Breast epithelium (tissue), 4 donors: ENCODE measurements at regions of chr3 and their contacts with region 1.

Region 1: GRCh38 chr3:193465992-193466608 is 87.5 kb upstream of the ATP13A5 start:
- DNase-seq: no peak
- H3K4me3 ChIP-seq: no peak overlapping the region
- H3K27ac ChIP-seq: no peak overlapping the region
- H3K4me1 ChIP-seq: no peaks in the 10 kb centered on the region
- H3K27me3 ChIP-seq: no peaks in the 10 kb centered on the region
- CTCF ChIP-seq: no peak
- POLR2A ChIP-seq: no peak

Region 2: DNA sequence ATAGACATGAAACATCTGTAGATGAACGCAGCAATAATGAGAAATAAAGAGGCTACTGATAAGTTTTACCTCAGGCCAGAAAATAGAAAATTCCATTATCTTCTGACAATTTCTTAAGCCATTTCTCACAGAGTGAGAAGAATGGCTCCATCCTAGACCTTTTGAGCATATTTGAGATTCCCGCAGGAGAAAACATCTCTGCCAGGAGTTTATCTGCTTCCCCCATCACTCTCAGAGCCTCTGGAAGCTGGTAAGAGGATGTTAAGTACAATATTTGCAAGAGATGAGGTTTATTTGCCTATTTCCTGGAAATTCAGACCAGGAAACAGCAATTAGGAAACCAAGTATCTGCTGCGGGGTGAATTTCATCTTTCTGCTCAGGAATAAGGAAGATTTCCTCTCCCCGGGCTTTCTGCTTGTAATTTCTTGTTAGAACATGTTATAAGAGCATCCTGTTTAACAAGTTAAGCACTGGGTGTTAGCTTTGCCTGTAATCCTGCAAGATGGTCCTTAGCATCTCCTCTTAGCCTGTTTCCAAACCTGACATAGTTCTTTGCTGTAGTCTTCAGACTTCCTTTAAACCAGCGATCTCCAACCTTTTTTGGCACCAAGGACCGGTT is 33.9 kb after region 1 on chr3:
- intact Hi-C with region 1: loop called (anchors 2 kb)
- DNase-seq: no peak
- H3K4me3 ChIP-seq: no peak overlapping the region
- H3K27ac ChIP-seq: no peak overlapping the region
- H3K4me1 ChIP-seq: no peaks in the 10 kb centered on the region
- H3K27me3 ChIP-seq: no peaks in the 10 kb centered on the region
- CTCF ChIP-seq: no peak
- POLR2A ChIP-seq: no peak

Region 3: GRCh38 chr3:193572426-193572908 is 106.4 kb after region 1 on chr3:
- intact Hi-C with region 1: loop called (anchors 2 kb)
- DNase-seq: peak in 1 of 2 donors; percentile 32
- H3K4me3 ChIP-seq: no peak overlapping the region
- H3K27ac ChIP-seq: no peak overlapping the region
- H3K4me1 ChIP-seq: no peaks in the 10 kb centered on the region
- H3K27me3 ChIP-seq: no peaks in the 10 kb centered on the region
- CTCF ChIP-seq: peak; percentile 24 to 74 (median 74)
- POLR2A ChIP-seq: no peak

Region 4: GRCh38 chr3:194070634-194071409 is 604.7 kb after region 1 on chr3:
- intact Hi-C with region 1: loop called (anchors 10 kb)
- DNase-seq: peak; percentile 89 to 91
- H3K4me3 ChIP-seq: peak overlapping the region; percentile 46 to 75 (median 53)
- H3K27ac ChIP-seq: peak overlapping the region; percentile 87 to 95
- H3K4me1 ChIP-seq: peaks cover 7 to 10% of the 10 kb centered on the region in 2 donors
- H3K27me3 ChIP-seq: no peaks in the 10 kb centered on the region
- CTCF ChIP-seq: no peak
- POLR2A ChIP-seq: no peak

Region 5: DNA sequence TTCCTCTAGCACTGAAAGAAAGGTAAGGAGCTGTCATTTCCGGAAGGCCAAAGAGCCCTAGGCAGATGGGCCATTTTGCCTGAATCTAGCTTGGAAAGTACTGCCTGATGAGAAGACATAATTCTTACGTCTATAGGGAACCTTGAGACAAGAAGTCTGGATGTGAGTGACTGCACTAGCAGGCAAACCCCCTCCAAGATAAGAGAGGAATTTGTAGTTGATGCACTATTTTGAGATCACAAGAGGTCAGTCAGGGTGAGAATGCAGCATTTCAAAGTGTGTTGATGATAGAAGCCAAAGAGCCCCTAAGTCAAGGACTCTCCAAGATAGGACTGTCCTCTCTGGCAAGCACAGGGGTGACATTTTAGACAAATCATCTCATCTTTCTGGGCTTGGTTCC is 769.1 kb after region 1 on chr3:
- intact Hi-C with region 1: no loop called
- DNase-seq: no peak
- H3K4me3 ChIP-seq: no peak overlapping the region
- H3K27ac ChIP-seq: no peak overlapping the region
- H3K4me1 ChIP-seq: no peaks in the 10 kb centered on the region
- H3K27me3 ChIP-seq: no peaks in the 10 kb centered on the region
- CTCF ChIP-seq: no peak
- POLR2A ChIP-seq: no peak